ENCODE measurements at regions of chr3 and their contacts with region 1.

Region 1: GRCh38 chr3:1190579-1190978 is 97.8 kb downstream of the CNTN6 start:
- DNase-seq: no peak
- H3K4me3 ChIP-seq: no peak overlapping the region
- H3K27ac ChIP-seq: no peak overlapping the region
- H3K4me1 ChIP-seq: peaks cover 0 to 6% (median 1%) of the 10 kb centered on the region in 4 experiments; a peak in 4 of 7 replicates
- H3K27me3 ChIP-seq: no peaks in the 10 kb centered on the region
- CTCF ChIP-seq: no peak
- EP300 ChIP-seq: no peak
- POLR2A ChIP-seq: no peak
- RAD21 ChIP-seq: no peak

Region 2: DNA sequence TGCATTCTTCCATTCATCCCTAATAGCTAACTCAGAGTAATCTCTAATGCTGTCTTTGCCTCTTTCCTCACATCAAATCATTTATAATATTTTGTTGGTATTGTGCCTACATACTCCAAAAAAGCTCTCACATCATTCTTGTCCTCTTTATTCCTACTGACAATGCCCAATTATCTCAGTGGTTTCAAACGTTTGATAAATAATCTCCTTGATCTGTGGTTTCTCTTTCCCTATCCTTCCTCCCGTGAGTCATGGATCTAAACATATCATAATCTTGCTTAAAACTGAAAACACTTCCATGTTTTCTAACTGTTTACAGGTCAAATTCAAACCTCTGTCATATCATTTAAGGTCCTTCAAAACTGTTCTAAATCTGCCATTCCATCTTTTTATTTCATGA is 17.3 kb after region 1 on chr3:
- CTCF ChIA-PET with region 1: interaction called, 14 read pairs
- POLR2A ChIA-PET with region 1: no interaction called
- DNase-seq: no peak
- H3K4me3 ChIP-seq: no peak overlapping the region
- H3K27ac ChIP-seq: no peak overlapping the region
- H3K4me1 ChIP-seq: no peaks in the 10 kb centered on the region
- H3K27me3 ChIP-seq: no peaks in the 10 kb centered on the region
- CTCF ChIP-seq: no peak
- EP300 ChIP-seq: no peak
- POLR2A ChIP-seq: no peak
- RAD21 ChIP-seq: no peak

Measured in H1 (cell line).